SK-N-SH (cell line): ENCODE measurements at regions of chr3 and their contacts with region 1.

Region 1: GRCh38 chr3:124014366-124014942 is 22.5 kb upstream of the ROPN1 start:
- DNase-seq: no peak
- H3K4me3 ChIP-seq: no peak overlapping the region
- H3K27ac ChIP-seq: no peak overlapping the region
- H3K4me1 ChIP-seq: peaks cover 0 to 5% of the 10 kb centered on the region in 2 experiments; a peak in 1 of 4 replicates
- H3K27me3 ChIP-seq: no peaks in the 10 kb centered on the region
- CTCF ChIP-seq: no peak
- EP300 ChIP-seq: no peak
- RAD21 ChIP-seq: no peak

Region 2: GRCh38 chr3:124026516-124026915 is 12.1 kb after region 1 on chr3:
- CTCF ChIA-PET with region 1: interaction called, 11 read pairs
- POLR2A ChIA-PET with region 1: no interaction called
- DNase-seq: no peak
- H3K4me3 ChIP-seq: no peak overlapping the region
- H3K27ac ChIP-seq: no peak overlapping the region
- H3K4me1 ChIP-seq: peaks cover 0 to 3% of the 10 kb centered on the region in 2 experiments; a peak in 1 of 4 replicates
- H3K27me3 ChIP-seq: no peaks in the 10 kb centered on the region
- CTCF ChIP-seq: no peak
- EP300 ChIP-seq: no peak
- RAD21 ChIP-seq: no peak